ENCODE measurements at regions of chr22 and their contacts with region 1.

Region 1: GRCh38 chr22:20441631-20442484 is 4.2 kb upstream of the SCARF2 start:
- DNase-seq: no peak
- H3K4me3 ChIP-seq: no peak overlapping the region
- H3K4me3 Mint-ChIP-seq: no peak overlapping the region
- H3K27ac Mint-ChIP-seq: no peak overlapping the region
- H3K4me1 ChIP-seq: peaks cover 2% of the 10 kb centered on the region; the same call in 1 of the 2 replicates
- H3K4me1 Mint-ChIP-seq: peaks cover 4% of the 10 kb centered on the region
- H3K27me3 ChIP-seq: no peaks in the 10 kb centered on the region
- H3K27me3 Mint-ChIP-seq: peaks cover 3% of the 10 kb centered on the region
- CTCF ChIP-seq: no peak

Region 2: DNA sequence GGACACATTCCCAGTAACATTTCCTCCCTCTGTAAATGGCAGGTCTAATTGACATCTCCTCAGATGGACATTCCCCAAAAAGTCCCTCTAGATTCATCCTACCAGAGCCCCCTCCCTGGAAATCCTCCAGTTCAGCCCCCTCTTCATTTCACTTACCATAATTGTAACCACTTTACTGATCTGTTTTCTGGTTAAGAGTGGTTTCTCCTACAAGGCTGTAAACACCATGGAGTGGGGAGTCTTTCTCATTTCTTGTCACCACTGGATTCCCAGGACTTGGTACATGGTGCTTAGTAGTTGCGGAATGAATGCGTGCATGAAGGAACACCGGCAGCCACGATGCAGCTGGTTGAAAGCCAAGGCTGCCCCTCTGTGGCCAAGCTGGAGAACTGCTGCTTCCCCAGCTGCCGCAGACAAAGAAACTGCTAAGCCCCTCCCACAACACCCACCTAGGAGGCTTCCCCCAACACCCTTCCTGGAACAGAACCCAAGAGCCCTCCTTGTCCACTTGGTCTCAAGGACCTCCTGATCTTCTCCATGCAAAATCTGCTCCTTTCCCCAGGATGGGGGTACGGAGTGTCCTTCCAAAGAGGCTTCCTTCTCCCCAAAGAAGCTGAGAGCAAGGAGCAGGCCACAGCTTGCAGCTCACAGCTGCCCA is 14.3 kb after region 1 on chr22:
- CTCF ChIA-PET with region 1: interaction called, 10 read pairs
- POLR2A ChIA-PET with region 1: no interaction called
- intact Hi-C with region 1: no loop called
- DNase-seq: peak; percentile 70 to 80
- H3K4me3 ChIP-seq: no peak overlapping the region
- H3K4me3 Mint-ChIP-seq: no peak overlapping the region
- H3K27ac Mint-ChIP-seq: no peak overlapping the region
- H3K4me1 ChIP-seq: no peaks in the 10 kb centered on the region
- H3K4me1 Mint-ChIP-seq: peaks cover 8% of the 10 kb centered on the region
- H3K27me3 ChIP-seq: no peaks in the 10 kb centered on the region
- H3K27me3 Mint-ChIP-seq: no peaks in the 10 kb centered on the region
- CTCF ChIP-seq: peak; percentile 87 to 91